Aorta (tissue), 5 donors: ENCODE measurements at regions of chr2 and their contacts with region 1.

Region 1: DNA sequence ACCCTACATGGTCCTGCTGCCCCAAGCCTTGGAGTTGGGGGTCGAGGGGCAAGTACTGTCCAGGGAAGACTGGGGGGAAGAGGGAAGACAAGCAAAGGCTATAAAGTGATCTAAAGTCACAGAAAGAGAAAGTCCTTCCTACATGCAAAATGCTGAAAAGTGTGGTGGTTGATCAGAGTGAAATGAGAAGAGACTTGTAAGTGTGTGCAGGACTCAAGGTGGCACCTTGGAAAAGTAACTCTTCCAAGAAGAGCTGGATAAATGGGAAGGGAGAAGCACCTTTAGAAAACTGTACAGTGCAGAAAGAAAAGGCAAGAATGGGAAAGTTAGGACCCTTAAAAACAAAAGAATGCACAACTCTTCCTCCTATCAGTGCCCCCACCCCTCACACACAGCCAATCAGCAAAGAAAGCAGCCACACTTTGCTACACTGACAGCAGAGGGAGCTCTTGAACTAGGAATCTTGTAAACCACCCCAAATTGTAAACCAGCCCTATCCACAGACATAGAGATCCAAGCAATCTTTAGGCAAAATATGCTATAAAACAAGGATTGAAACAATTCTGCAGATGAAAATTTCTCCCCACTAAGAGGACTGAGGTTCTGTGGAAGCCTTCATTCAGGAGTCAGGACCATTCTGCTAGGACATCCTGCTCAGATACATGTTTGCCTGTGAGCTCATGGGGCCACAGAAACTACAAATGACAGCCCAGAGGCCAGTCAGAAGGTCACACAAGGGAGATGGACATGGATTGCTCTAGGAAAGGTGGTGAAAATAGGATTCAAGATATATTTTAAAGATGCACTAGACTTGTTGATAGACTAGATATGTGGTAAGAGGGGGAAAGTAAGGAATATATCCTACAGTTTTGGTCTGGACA is 146.4 kb downstream of the FTCDNL1 start:
- DNase-seq: no peak
- ATAC-seq: no peak
- H3K4me3 ChIP-seq: no peak overlapping the region
- H3K27ac ChIP-seq: no peak overlapping the region
- H3K4me1 ChIP-seq: no peaks in the 10 kb centered on the region
- H3K27me3 ChIP-seq: no peaks in the 10 kb centered on the region

Region 2: GRCh38 chr2:199488772-199489400 is 215.7 kb before region 1 on chr2:
- intact Hi-C with region 1: no loop called
- DNase-seq: no peak
- ATAC-seq: peak; percentile 53
- H3K4me3 ChIP-seq: no peak overlapping the region
- H3K27ac ChIP-seq: no peak overlapping the region
- H3K4me1 ChIP-seq: no peaks in the 10 kb centered on the region
- H3K27me3 ChIP-seq: peaks cover 0 to 2% of the 10 kb centered on the region in 2 donors

Region 3: GRCh38 chr2:199646439-199646838 is 58.2 kb before region 1 on chr2:
- intact Hi-C with region 1: no loop called
- DNase-seq: no peak
- ATAC-seq: no peak
- H3K4me3 ChIP-seq: no peak overlapping the region
- H3K27ac ChIP-seq: no peak overlapping the region
- H3K4me1 ChIP-seq: no peaks in the 10 kb centered on the region
- H3K27me3 ChIP-seq: no peaks in the 10 kb centered on the region

Region 4: GRCh38 chr2:199772035-199772976 is 67.7 kb after region 1 on chr2:
- intact Hi-C with region 1: no loop called
- DNase-seq: no peak
- ATAC-seq: no peak
- H3K4me3 ChIP-seq: no peak overlapping the region
- H3K27ac ChIP-seq: no peak overlapping the region
- H3K4me1 ChIP-seq: no peaks in the 10 kb centered on the region
- H3K27me3 ChIP-seq: no peaks in the 10 kb centered on the region

Region 5: GRCh38 chr2:199861132-199861774 is 156.7 kb after region 1 on chr2:
- intact Hi-C with region 1: loop called in 1 of 2 experiments (anchors 10 kb)
- DNase-seq: no peak
- ATAC-seq: no peak
- H3K4me3 ChIP-seq: no peak overlapping the region
- H3K27ac ChIP-seq: no peak overlapping the region
- H3K4me1 ChIP-seq: no peaks in the 10 kb centered on the region
- H3K27me3 ChIP-seq: no peaks in the 10 kb centered on the region